Ascending aorta (tissue), 2 donors: ENCODE measurements at regions of chr3 and their contacts with region 1.

Region 1: GRCh38 chr3:8111069-8111798 is 390.4 kb upstream of the LMCD1 start:
- DNase-seq: peak; percentile 12 to 82
- H3K4me3 ChIP-seq: peak overlapping the region; percentile 18 to 47
- H3K27ac ChIP-seq: no peak overlapping the region
- H3K4me1 ChIP-seq: no peaks in the 10 kb centered on the region
- H3K27me3 ChIP-seq: no peaks in the 10 kb centered on the region
- CTCF ChIP-seq: peak; percentile 61 to 74 (median 66)

Region 2: GRCh38 chr3:6785726-6786125 is 1325.5 kb before region 1 on chr3:
- intact Hi-C with region 1: loop called (anchors 5 kb)
- DNase-seq: no peak
- H3K4me3 ChIP-seq: no peak overlapping the region
- H3K27ac ChIP-seq: no peak overlapping the region
- H3K4me1 ChIP-seq: no peaks in the 10 kb centered on the region
- H3K27me3 ChIP-seq: no peaks in the 10 kb centered on the region
- CTCF ChIP-seq: no peak

Region 3: GRCh38 chr3:7285505-7285904 is 825.7 kb before region 1 on chr3:
- intact Hi-C with region 1: loop called (anchors 5 kb)
- DNase-seq: no peak
- H3K4me3 ChIP-seq: no peak overlapping the region
- H3K27ac ChIP-seq: no peak overlapping the region
- H3K4me1 ChIP-seq: no peaks in the 10 kb centered on the region
- H3K27me3 ChIP-seq: no peaks in the 10 kb centered on the region
- CTCF ChIP-seq: peak in 1 of 3 experiments; percentile 28

Region 4: DNA sequence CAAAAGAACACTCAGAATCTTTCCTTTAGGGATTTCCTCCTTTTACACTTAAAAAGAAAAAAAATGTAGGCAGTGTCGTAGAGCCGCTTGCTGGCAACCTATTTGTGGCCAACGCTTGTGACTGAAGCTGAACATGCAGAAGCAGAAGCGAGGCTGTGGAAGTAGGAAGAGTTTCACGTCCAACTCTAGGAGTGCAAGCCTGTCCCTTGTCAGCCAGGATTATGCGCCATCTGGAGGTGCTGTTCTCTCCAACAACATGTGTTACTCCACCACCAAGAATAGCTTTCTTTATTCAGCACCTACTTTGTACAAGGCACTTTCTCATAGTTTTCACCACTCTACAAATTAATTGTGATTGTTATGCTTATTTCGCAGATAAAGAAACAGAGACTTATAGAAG is 167.2 kb after region 1 on chr3:
- intact Hi-C with region 1: no loop called
- DNase-seq: no peak
- H3K4me3 ChIP-seq: no peak overlapping the region
- H3K27ac ChIP-seq: no peak overlapping the region
- H3K4me1 ChIP-seq: no peaks in the 10 kb centered on the region
- H3K27me3 ChIP-seq: no peaks in the 10 kb centered on the region
- CTCF ChIP-seq: no peak